PC-3 (cell line): ENCODE measurements at regions of chr2 and their contacts with region 1.

Region 1: DNA sequence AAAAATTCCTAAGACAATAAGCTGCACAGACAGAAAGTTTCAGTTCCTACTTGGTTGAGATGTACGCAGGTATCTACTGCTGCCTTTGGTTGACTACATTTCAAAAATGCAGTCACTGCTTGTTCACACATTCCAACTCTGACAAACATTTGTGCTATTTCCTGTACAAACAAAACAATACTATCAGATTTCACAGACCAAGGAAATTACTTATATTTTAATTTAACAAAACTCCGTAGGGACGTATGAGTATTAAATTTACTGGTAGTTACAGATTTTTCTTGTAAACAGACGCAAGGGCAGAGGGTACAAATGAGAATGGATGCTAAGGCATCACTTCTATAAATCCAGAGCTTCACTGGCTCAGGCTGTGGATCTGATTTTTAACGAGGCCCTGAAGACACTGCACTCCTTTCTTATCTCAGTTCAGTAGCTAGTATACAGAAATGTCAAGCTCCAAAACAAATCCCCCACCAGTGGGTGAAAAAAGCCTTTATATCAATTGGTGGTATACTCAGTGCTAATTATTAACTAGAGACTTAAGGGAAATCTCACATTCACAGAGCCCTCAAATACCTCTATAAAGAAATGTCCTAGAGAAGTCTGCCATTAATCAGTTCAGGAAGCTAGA is 31.7 kb upstream of the TTC32 start:
- DNase-seq: peak; percentile 90
- ATAC-seq: peak; percentile 96
- H3K4me3 ChIP-seq: peak overlapping the region; percentile 62
- H3K27ac ChIP-seq: peak overlapping the region; percentile 89
- H3K4me1 ChIP-seq: peaks cover 25% of the 10 kb centered on the region
- H3K27me3 ChIP-seq: no peaks in the 10 kb centered on the region
- CTCF ChIP-seq: no peak

Region 2: GRCh38 chr2:19901442-19902215 is 31.8 kb before region 1 on chr2 and contains the start of gene TTC32:
- CTCF ChIA-PET with region 1: no interaction called
- POLR2A ChIA-PET with region 1: interaction called, 5 read pairs
- intact Hi-C with region 1: loop called (anchors 1 kb)
- DNase-seq: peak; percentile 92
- ATAC-seq: peak; percentile 81
- H3K4me3 ChIP-seq: peak within 1 kb of the TSS; percentile 85
- H3K27ac ChIP-seq: peak within 1 kb of the TSS; percentile 89
- H3K4me1 ChIP-seq: peaks cover 30% of the 10 kb centered on the region
- H3K27me3 ChIP-seq: no peaks in the 10 kb centered on the region
- CTCF ChIP-seq: no peak
- total RNA-seq, gene TTC32: 10.0 and 12.1 TPM in 2 replicates

Region 3: GRCh38 chr2:19947184-19947940 is 13.9 kb after region 1 on chr2:
- CTCF ChIA-PET with region 1: no interaction called
- POLR2A ChIA-PET with region 1: interaction called, 7 read pairs
- intact Hi-C with region 1: loop called (anchors 2 kb)
- DNase-seq: peak; percentile 70
- ATAC-seq: peak; percentile 88
- H3K4me3 ChIP-seq: peak overlapping the region; percentile 14; the same call in 1 of the 2 replicates
- H3K27ac ChIP-seq: peak overlapping the region; percentile 36
- H3K4me1 ChIP-seq: peaks cover 21% of the 10 kb centered on the region
- H3K27me3 ChIP-seq: no peaks in the 10 kb centered on the region
- CTCF ChIP-seq: no peak

Region 4: GRCh38 chr2:19979932-19980331 is 46.5 kb after region 1 on chr2:
- CTCF ChIA-PET with region 1: no interaction called
- POLR2A ChIA-PET with region 1: interaction called, 14 read pairs
- intact Hi-C with region 1: no loop called
- DNase-seq: no peak
- ATAC-seq: peak; percentile 64
- H3K4me3 ChIP-seq: no peak overlapping the region
- H3K27ac ChIP-seq: no peak overlapping the region
- H3K4me1 ChIP-seq: no peaks in the 10 kb centered on the region
- H3K27me3 ChIP-seq: no peaks in the 10 kb centered on the region
- CTCF ChIP-seq: no peak

Region 5: DNA sequence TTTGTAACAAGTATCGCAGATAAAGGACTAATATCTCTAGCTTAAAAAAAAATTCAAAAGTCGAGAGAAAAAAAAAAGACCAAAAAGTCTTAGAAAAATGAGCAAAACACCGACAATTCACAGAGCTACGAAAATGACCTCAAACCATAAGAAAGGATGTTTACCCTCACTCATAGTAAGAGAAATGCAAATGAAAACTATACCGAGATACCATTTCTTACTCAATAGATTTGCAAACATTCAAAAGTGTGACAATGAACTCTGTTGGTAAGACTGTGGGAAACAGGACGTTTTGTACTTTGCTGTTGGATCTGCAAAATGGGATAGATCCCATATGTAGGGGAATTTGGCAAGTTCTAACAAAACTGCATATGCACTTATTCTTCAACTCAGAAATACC is 929.4 kb after region 1 on chr2:
- CTCF ChIA-PET with region 1: no interaction called
- POLR2A ChIA-PET with region 1: no interaction called
- intact Hi-C with region 1: no loop called
- DNase-seq: no peak
- ATAC-seq: no peak
- H3K4me3 ChIP-seq: no peak overlapping the region
- H3K27ac ChIP-seq: no peak overlapping the region
- H3K4me1 ChIP-seq: no peaks in the 10 kb centered on the region
- H3K27me3 ChIP-seq: peaks cover 11% of the 10 kb centered on the region; the same call in 1 of the 2 replicates
- CTCF ChIP-seq: no peak